Activated naive CD4-positive, alpha-beta T cell treated with anti-CD3 and anti-CD28 coated beads for 36 hours (primary cell): ENCODE measurements at regions of chr3 and their contacts with region 1.

Region 1: GRCh38 chr3:72523429-72524151 is 324.7 kb downstream of the SHQ1 start:
- DNase-seq: peak; percentile 30
- H3K4me3 Mint-ChIP-seq: no peak overlapping the region
- H3K27ac Mint-ChIP-seq: no peak overlapping the region
- H3K4me1 Mint-ChIP-seq: peaks cover 44% of the 10 kb centered on the region
- H3K27me3 Mint-ChIP-seq: peaks cover 2% of the 10 kb centered on the region

Region 2: DNA sequence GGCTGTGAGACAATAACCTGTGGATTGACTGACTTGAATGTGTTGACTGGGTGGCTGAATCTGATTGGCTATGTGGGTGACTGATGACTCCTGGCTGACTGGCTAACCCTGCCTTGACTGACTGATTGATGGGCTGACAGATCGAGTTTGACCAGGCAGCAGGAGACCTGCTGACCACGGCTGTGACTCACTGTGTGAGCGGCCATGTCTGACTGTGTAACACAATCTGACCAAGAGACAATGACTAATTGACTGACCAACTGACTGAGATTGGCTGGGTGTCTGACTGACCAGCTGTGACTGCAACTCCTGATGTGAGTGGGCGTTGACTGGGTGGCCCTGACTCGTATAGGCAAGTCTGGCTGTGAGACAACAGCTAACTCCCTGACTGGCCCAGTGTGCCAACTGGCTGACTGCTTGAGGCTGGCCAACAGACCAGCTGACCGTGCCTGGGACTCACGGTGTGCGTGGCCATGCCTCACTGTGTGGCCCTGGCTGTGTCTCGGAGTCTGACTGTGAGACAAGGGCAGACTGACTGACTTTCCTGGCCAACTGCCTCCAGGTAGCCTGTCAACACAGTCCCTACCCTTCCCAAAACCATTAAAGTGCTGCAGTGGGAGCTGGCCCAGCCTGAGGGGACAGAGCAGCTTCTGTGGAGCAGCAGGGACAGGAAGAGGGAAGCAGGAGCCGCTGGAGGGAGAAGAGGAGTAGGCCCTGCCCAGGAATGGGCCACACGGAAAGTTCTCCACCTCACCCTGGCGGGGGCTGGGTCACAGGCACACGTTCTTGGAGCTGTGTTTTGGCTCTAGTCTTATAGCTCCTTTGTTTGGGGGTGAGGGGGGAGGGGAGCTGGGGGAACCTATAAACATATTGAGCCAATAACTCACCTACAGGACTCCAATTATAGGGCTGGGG is 184.2 kb before region 1 on chr3:
- CTCF ChIA-PET with region 1: no interaction called
- intact Hi-C with region 1: loop called (anchors 5 kb)
- DNase-seq: no peak
- H3K4me3 Mint-ChIP-seq: no peak overlapping the region
- H3K27ac Mint-ChIP-seq: no peak overlapping the region
- H3K4me1 Mint-ChIP-seq: peaks cover 36% of the 10 kb centered on the region
- H3K27me3 Mint-ChIP-seq: no peaks in the 10 kb centered on the region

Region 3: DNA sequence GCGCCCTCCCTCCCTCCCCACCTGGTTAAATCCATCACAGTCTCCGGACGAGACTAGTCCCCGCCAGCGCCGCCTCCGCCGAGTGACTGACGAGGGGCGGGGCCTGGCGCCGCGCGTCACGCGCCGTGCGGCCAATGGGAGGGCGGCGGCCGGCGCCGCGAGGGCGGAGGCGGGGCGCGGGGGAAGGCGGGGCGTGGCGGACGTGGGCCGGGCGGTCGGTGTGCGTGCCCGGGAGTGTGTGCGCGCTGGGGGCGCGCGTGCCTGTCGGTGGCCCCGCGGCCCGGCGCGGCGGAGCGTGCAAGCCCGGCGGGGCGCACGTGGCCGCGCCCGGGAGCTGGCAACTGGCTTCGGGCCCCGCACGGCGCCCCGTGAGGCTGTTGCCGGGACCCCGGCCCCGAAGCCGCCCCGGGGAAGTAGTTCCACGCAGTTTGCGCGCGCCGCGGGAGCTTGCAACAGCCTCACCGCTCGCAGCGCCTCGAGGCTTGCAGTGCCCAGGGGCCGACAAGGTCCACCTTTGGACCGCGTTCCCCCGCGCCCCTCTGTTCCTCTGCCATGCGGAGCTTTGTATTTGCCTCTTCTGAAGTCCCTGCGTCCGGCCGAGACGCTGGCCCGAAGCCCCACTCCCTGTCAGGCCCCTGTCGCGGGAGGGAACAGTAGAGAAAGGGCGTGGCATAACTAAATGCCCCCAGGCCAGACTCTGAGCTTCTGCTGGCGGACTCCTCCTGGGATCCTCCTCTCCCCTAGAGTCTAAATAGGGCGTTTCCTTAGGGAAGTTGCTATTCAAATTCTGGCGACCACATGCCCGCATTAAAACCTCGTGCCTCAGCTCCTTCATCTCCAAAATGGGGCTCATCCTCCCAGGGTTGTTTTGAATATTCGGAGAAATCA is 76.3 kb before region 1 on chr3:
- CTCF ChIA-PET with region 1: no interaction called
- intact Hi-C with region 1: loop called (anchors 1 kb)
- DNase-seq: peak; percentile 88
- H3K4me3 Mint-ChIP-seq: peak overlapping the region; percentile 54
- H3K27ac Mint-ChIP-seq: no peak overlapping the region
- H3K4me1 Mint-ChIP-seq: peaks cover 37% of the 10 kb centered on the region
- H3K27me3 Mint-ChIP-seq: peaks cover 12% of the 10 kb centered on the region

Region 4: GRCh38 chr3:72538070-72538745 is 14.6 kb after region 1 on chr3:
- CTCF ChIA-PET with region 1: no interaction called
- intact Hi-C with region 1: loop called (anchors 1 kb)
- DNase-seq: peak; percentile 37
- H3K4me3 Mint-ChIP-seq: no peak overlapping the region
- H3K27ac Mint-ChIP-seq: no peak overlapping the region
- H3K4me1 Mint-ChIP-seq: peaks cover 21% of the 10 kb centered on the region
- H3K27me3 Mint-ChIP-seq: peaks cover 3% of the 10 kb centered on the region

Region 5: DNA sequence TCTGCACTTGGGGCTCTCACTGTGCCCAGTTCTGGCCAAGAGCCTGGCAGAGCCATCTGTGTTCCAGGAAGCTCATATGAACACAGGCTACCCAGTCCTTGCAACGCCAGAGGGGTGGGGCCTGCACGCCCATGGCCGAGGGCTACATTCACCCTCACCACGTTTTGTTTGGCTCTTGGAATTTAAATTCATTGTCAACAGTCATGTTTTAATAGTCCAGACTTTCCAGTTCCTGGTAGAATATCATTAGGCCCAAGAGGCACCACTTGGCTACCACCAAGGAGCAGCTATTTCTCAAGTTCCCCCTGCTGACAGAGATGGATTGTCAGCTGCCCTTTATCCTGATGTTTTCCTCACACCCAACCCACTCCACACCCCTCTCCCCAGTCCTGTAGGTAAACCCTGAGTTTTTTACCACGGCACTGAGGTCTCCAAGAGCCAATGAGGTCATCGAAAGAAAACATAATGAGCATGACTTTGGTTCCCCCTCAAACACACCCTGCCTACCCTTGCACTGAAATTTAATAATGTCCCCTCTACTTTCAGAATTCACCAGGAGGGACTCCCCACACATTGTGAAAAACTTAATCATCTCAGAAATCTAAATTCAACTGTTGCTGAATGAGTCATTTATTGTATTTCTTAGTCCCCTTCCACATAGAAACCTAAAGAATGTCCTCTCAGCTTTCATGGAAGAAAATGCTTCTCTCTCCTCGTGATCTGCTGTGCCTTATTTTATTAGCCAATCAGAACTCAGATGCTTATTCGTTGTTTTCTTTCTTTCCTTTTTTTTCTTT is 199.5 kb after region 1 on chr3:
- CTCF ChIA-PET with region 1: interaction called, 5 read pairs
- intact Hi-C with region 1: loop called (anchors 2 kb)
- DNase-seq: peak; percentile 27
- H3K4me3 Mint-ChIP-seq: no peak overlapping the region
- H3K27ac Mint-ChIP-seq: no peak overlapping the region
- H3K4me1 Mint-ChIP-seq: peaks cover 17% of the 10 kb centered on the region
- H3K27me3 Mint-ChIP-seq: no peaks in the 10 kb centered on the region